ENCODE measurements at regions of chr5 and their contacts with region 1.

Region 1: DNA sequence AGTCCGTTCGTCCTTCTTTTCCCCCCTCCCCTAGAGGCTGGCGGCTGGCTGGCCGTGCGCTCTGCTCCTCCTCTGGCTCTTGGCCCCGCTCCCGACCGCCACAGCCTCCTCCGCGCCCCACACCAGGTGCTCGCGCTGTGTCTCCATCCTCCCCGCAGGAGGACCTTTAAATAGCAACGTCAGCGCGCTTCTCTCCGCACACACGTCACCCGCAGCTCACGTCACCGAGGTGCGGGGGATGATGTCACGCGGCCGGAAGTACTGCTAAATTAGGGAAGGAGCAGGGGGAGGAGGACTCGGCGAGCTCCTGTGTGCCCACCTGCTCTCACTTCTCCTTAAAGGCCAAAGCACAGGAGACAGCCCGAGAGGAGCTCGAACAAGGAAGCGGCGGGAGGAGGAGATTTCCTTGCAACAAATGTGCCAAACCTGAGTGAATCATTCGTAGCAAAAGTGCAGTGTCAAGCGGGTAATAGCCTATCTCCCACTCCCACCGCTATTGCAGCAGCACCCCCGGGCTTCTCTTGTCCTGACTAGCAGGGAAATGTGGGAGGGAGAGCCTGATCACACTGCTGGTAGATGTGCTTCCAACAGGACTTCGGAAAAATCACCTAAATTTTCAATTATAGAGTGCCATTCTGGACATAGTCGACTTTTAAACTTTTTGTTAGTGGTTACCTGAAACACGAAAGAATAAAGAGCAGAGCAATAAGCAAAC is 614 bp upstream of the HOMER1 start:
- DNase-seq: peak; percentile 87
- H3K4me3 Mint-ChIP-seq: peak overlapping the region; percentile 93
- H3K27ac Mint-ChIP-seq: peak overlapping the region; percentile 96
- H3K4me1 Mint-ChIP-seq: peaks cover 35% of the 10 kb centered on the region
- H3K27me3 Mint-ChIP-seq: peaks cover 3% of the 10 kb centered on the region

Region 2: DNA sequence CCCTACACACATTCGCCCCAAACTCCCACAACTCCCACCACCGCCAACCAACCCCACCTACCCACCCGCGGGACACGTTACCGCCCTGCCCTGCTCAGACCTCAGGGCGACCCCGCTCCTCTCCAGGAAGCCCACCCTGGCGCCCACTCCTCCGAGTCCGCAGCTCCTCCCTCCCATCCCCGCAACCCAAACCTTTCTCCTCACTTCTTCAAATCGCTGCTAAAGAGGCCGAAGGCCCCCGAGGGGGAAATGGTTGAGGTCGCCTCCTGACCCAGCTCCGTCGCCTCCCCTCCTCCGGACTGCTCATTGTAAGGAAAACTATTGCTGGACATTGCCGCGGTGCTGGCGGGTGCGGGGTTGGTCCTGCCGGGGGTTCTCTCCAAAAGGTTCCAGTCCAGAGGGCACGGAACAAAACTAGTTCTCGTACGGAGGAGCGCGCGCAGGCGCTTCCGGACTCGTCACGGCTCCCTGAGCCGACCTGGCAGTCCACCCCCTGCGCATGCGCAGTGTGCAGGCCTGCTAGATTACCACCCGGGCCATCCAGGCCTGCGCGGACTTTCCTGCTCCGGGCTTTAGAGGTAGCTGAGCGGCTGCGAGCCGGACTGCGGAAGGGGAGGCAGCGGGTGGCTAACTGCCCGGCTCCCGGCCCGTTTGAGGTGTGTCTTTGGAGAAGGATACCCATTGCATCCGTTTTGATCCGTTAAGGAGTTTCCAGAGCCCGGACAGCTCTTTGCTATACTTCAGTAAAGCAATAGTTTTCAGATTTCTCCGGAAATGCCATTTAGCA is 1220.1 kb before region 1 on chr5 and contains the start of gene AP3B1:
- intact Hi-C with region 1: loop called (anchors 10 kb)
- DNase-seq: peak; percentile 97
- H3K4me3 Mint-ChIP-seq: peak within 1 kb of the TSS; percentile 99
- H3K27ac Mint-ChIP-seq: peak within 1 kb of the TSS; percentile 96
- H3K4me1 Mint-ChIP-seq: peaks cover 29% of the 10 kb centered on the region
- H3K27me3 Mint-ChIP-seq: peaks cover 3% of the 10 kb centered on the region
- total RNA-seq, gene AP3B1: 42.9 and 43.9 TPM in 2 replicates

Region 3: DNA sequence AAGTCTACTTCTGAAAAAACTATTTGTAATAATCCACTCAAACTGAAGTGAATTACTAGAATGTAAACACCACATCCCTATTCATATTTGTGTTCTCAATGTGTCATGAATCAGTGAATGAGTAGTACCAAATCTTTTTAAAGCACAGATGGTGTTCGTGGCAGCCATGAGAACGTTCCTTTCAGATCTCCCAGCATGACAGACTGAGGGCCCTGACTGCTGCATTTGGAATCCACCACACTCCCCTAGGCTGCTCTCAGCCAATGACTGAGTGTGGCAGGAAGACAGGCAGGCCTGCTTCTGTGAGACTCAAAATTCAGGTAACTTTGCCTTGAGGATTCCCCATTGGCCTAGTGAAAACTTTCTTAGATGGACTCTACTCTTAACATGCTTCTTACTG is 289.5 kb before region 1 on chr5:
- intact Hi-C with region 1: no loop called
- DNase-seq: no peak
- H3K4me3 Mint-ChIP-seq: no peak overlapping the region
- H3K27ac Mint-ChIP-seq: no peak overlapping the region
- H3K4me1 Mint-ChIP-seq: peaks cover 2% of the 10 kb centered on the region
- H3K27me3 Mint-ChIP-seq: no peaks in the 10 kb centered on the region

Region 4: DNA sequence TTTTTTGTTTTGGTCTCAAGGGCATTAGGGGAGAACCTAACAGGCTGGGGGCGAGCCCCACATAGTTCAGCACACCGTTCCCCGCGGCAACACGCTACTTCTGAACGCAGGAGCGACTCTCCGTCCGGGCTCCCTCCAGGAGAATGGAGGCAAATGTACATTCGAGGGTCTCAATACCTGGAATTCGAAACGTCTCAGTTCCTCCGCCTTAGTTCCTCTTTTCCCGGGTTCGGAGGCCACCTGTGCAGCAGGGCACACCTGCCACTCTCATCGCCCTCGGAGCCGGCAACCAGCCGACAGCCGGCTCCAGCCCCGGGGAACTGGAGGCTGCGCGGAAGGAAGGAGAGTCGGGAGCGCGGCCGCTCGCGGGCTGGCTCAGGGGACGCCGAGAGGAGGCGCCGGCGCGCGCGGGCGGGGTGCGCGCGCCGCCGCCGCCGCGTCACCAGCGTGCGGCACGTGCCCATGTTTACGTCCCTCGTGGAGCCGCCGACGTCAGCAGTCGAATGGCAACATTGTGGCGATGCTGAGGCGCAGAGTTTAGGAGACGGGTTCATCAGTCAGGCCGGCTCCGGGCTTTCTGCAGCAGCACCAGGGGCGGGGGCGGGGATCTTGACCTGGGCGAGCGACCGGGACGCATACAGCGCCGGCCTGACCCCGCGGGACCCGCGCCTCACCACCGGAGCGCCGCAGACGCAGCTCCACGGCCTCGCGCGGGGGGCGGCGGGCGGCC is 278.7 kb before region 1 on chr5 and contains the start of gene JMY:
- intact Hi-C with region 1: loop called (anchors 1 kb)
- DNase-seq: peak; percentile 71
- H3K4me3 Mint-ChIP-seq: peak within 1 kb of the TSS; percentile 87
- H3K27ac Mint-ChIP-seq: peak within 1 kb of the TSS; percentile 92
- H3K4me1 Mint-ChIP-seq: peaks cover 22% of the 10 kb centered on the region
- H3K27me3 Mint-ChIP-seq: no peaks in the 10 kb centered on the region
- total RNA-seq, gene JMY: 4.4 and 5.8 TPM in 2 replicates

Region 5: DNA sequence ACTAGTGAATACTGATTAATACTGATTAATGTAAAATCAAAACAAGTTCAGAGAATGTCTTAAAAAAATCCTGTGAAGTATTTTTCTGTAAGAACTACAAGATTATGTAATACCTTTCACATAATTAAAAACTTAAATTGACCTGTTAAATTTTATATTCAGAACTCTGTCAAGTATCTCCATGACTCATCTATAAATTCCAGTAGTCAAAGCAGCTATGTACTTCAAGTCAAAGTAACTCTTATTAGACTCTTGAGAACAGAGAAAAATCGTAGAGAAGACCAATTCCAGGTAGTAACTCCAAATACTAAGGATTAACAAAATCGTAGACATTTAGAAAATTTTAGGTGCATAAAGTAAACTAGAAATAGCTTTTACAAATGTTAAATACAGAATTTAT is 77.7 kb before region 1 on chr5:
- intact Hi-C with region 1: no loop called
- DNase-seq: no peak
- H3K4me3 Mint-ChIP-seq: no peak overlapping the region
- H3K27ac Mint-ChIP-seq: no peak overlapping the region
- H3K4me1 Mint-ChIP-seq: peaks cover 1% of the 10 kb centered on the region
- H3K27me3 Mint-ChIP-seq: no peaks in the 10 kb centered on the region

Region 6: GRCh38 chr5:79546782-79547428 is 32.4 kb after region 1 on chr5:
- intact Hi-C with region 1: no loop called
- DNase-seq: no peak
- H3K4me3 Mint-ChIP-seq: no peak overlapping the region
- H3K27ac Mint-ChIP-seq: no peak overlapping the region
- H3K4me1 Mint-ChIP-seq: no peaks in the 10 kb centered on the region
- H3K27me3 Mint-ChIP-seq: peaks cover 3% of the 10 kb centered on the region

Region 7: DNA sequence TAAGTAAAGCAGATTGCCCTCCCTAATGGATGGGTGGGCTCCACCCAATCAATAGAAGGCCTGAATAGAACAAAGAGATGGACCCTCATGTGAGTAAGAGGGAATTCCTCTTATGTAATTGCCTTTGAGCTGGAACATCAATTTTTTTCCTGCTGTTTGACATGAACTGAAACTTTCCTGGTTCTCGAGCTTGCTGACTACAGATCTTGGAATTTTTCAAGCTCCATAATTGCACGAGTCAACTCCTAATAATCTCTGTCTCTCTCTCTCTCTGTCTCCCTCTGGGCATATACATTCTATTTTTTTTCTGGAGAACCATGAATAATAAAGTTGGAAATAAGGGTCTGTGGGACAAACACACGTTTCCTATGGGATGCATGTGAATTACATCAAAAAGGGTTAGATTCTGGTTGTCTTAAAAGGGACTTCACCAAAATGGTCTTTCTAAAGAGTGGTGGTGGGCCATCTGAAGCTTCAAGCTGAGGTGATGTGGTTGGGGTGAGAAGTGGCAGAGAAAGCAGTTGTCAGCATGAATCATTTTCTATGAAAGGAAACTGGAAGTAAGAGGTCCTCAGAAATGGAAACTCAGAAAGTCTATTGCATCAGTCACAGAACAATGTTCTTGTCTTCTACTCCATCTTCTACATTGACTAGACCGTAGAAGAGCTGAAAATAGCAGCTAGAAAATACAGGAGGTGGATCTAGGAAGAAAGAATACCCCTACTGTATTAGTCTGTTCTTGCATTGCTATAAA is 46.4 kb after region 1 on chr5:
- intact Hi-C with region 1: loop called (anchors 1 kb)
- DNase-seq: peak; percentile 13
- H3K4me3 Mint-ChIP-seq: peak overlapping the region; percentile 19
- H3K27ac Mint-ChIP-seq: peak overlapping the region; percentile 95
- H3K4me1 Mint-ChIP-seq: peaks cover 48% of the 10 kb centered on the region
- H3K27me3 Mint-ChIP-seq: no peaks in the 10 kb centered on the region

Region 8: DNA sequence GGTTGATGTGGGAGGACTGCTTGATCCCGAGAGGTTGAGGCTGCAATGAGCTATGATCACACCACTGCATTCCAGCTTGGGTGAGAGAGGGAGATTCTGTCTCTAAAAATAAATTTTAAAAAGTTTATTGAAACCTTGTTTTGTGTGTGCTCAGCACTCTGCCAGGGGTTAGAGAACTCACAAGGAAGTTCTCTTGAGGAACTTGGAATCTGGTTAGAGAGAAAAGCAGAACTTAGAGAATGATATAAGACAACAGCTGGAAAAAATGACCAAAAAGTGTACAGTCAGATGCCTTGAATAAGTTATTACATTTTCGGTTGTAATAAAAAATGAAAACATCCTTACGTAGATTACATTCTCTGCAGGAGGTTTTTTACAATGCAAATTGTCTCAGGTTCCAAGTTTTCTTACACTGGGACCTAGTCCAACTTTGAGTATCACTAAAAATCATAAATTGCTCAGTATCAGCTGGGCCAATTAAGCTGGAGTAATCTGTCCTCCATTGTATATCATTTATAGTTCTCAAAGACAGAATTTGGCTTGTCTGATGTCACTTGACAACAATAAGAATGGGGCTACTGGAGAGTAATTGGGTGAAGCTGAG is 76.0 kb after region 1 on chr5:
- intact Hi-C with region 1: no loop called
- DNase-seq: no peak
- H3K4me3 Mint-ChIP-seq: no peak overlapping the region
- H3K27ac Mint-ChIP-seq: no peak overlapping the region
- H3K4me1 Mint-ChIP-seq: peaks cover 2% of the 10 kb centered on the region
- H3K27me3 Mint-ChIP-seq: no peaks in the 10 kb centered on the region

Measured in activated T-helper 2 cell treated with anti-CD3 and anti-CD28 coated beads, Interferon-gamma antibody, Interleukin-2, Interleukin-4, amounts not matched to agents 10 μg/mL and 5 μg/mL and 100 μg/mL, durations not matched to agents 14 hours and 24 hours and 36 hours (primary cell).